ENCODE measurements at regions of chr11 and their contacts with region 1.

Region 1: DNA sequence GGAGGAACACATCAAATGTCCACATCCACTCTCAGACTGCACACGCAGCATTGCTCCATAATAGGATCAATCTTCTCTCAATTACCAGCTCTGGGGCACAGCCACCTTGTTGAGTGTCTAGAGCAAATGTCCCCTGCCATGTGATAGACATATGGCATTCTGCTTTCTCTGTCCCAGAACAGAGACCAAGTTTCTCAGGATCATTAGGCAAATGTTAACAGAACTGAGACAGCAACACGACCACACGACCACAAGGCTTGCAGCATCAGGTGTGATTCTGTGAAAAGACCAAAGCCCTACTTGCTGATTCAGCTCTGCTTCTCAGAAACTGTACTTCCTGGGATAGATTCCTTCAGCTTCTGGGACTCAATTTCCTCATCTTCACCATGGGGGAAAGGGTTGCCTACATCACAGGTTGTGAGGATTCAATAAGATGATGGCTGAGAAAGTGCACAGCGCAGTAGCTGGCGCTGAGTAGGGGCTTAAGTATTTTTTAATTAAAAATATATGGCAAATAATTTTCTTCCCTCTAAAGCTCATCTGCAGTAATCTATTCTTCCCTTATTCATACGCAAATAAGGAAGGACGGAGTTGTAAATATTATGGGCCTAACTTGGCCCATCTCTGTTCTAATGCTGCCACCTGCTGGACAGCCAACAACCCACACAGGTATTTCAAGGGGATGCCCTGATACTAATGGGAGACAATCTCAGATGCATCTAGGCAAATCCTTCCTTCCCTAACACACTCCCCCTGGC is 54.3 kb upstream of the USP47 start:
- DNase-seq: peak; percentile 77
- H3K4me3 ChIP-seq: no peak overlapping the region
- H3K27ac ChIP-seq: no peak overlapping the region
- H3K4me1 ChIP-seq: no peaks in the 10 kb centered on the region
- H3K27me3 ChIP-seq: peaks cover 9% of the 10 kb centered on the region
- CTCF ChIP-seq: peak; percentile 80

Region 2: GRCh38 chr11:11028017-11028692 is 759.3 kb before region 1 on chr11:
- CTCF ChIA-PET with region 1: interaction called, 26 read pairs
- POLR2A ChIA-PET with region 1: no interaction called
- intact Hi-C with region 1: loop called (anchors 2 kb)
- DNase-seq: peak; percentile 66
- H3K4me3 ChIP-seq: no peak overlapping the region
- H3K27ac ChIP-seq: no peak overlapping the region
- H3K4me1 ChIP-seq: no peaks in the 10 kb centered on the region
- H3K27me3 ChIP-seq: no peaks in the 10 kb centered on the region
- CTCF ChIP-seq: peak; percentile 85

Region 3: GRCh38 chr11:11157185-11157584 is 630.3 kb before region 1 on chr11:
- CTCF ChIA-PET with region 1: no interaction called
- POLR2A ChIA-PET with region 1: no interaction called
- intact Hi-C with region 1: loop called (anchors 2 kb)
- DNase-seq: peak; percentile 54
- H3K4me3 ChIP-seq: no peak overlapping the region
- H3K27ac ChIP-seq: no peak overlapping the region
- H3K4me1 ChIP-seq: no peaks in the 10 kb centered on the region
- H3K27me3 ChIP-seq: no peaks in the 10 kb centered on the region
- CTCF ChIP-seq: peak; percentile 55

Region 4: DNA sequence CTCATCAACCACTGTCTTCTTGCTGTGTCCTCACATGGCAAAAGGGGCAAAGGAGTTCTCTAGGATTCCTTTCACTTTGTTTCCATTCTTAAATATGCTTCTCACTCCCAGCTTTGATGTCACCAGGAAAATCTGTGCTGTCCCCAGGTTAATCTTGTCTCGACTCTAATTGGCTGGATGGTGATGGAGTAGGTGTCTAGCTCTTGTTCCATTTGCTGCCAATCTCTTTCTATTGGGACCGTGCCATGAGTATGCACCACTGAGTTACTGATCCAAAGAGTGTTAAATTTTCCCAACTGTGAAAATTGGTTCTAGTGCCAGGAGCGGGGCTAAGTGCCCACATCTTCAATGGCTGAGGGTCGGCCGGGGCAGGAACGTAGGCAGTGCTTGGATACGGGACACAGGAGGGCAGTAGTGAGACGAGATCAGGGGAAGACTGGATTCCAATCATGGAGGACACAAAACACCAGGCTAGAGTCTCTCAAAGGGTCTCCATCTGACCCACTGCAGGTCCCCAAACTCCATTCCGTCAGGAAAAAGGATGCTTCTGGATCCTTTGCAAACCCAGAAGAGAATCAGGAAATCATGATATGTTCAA is 386.8 kb before region 1 on chr11:
- CTCF ChIA-PET with region 1: no interaction called
- POLR2A ChIA-PET with region 1: no interaction called
- intact Hi-C with region 1: loop called (anchors 2 kb)
- DNase-seq: peak; percentile 23
- H3K4me3 ChIP-seq: no peak overlapping the region
- H3K27ac ChIP-seq: no peak overlapping the region
- H3K4me1 ChIP-seq: peaks cover 9% of the 10 kb centered on the region
- H3K27me3 ChIP-seq: no peaks in the 10 kb centered on the region
- CTCF ChIP-seq: peak; percentile 53

Region 5: GRCh38 chr11:11770296-11770695 is 17.2 kb before region 1 on chr11:
- CTCF ChIA-PET with region 1: no interaction called
- POLR2A ChIA-PET with region 1: no interaction called
- intact Hi-C with region 1: no loop called
- DNase-seq: no peak
- H3K4me3 ChIP-seq: no peak overlapping the region
- H3K27ac ChIP-seq: no peak overlapping the region
- H3K4me1 ChIP-seq: no peaks in the 10 kb centered on the region
- H3K27me3 ChIP-seq: peaks cover 11% of the 10 kb centered on the region
- CTCF ChIP-seq: no peak

Region 6: DNA sequence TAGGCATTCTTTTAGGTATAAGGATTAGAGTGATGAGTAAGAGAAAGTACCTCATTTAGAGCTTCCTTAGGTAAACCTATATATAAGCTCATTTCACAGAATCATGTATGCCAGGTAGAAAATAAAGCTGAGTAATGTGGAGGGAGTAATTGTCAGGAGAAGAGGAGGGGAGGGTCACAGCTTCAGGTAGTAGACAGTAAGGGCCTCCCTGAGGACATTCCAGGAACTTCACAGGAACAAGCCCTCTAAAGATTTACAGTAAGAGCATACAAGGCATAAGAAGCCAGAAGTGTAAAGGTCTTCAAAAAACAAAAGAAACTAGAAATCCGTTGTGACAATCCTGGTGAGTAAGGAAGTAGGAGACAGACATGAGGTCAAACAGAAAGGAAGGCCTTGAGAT is 111.9 kb after region 1 on chr11:
- CTCF ChIA-PET with region 1: no interaction called
- POLR2A ChIA-PET with region 1: no interaction called
- intact Hi-C with region 1: no loop called
- DNase-seq: no peak
- H3K4me3 ChIP-seq: no peak overlapping the region
- H3K27ac ChIP-seq: no peak overlapping the region
- H3K4me1 ChIP-seq: peaks cover 5% of the 10 kb centered on the region
- H3K27me3 ChIP-seq: no peaks in the 10 kb centered on the region
- CTCF ChIP-seq: no peak